ENCODE measurements at regions of chr3 and their contacts with region 1.

Region 1: DNA sequence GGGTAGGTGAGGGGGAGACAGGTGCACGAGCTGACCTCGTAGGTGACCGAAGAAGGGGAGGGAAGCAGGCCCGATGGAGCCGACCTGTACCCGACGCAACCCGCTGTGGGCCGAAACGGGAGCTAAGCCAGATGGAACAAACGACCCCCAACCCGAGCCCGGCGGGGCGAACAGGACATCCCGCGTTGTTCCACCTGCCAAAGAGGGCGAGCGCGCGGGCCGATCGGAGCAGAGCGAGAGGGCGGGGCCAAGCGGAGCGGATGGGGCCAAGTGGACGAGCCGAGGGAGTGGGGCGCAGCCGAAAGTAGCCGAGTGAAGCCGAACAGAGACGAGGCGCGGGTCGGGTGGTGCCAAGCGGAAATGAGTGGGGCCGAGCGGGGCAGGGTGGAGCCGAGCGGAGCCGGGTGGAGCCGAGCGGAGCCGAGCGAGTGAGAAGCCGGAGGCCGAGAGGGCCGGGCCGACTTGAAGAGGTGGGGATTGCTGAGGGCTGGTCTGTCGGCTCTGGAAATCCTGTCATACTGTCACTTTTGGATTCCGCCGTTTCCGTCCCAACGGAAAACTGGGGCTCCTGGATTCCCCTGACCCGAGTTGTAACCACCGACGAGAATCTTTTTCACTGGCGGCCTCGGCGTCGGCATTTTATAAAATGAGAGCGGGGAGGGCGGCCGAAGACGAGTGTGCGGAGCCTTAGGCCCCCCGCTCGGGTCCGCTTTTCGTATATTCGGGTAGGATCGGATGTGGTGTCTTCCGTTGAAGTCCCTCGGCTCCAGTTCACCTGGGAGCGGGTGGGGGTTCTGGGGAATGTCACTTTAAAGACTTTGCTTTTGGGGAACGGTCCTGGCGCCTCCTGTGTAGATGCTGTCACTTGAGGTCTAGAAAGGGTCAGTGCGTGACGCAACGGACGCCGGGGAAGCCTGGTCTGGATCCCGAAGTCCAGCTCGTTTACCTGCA is 15.6 kb upstream of the WNT7A start:
- DNase-seq: peak; percentile 85 to 95 (median 93)
- ATAC-seq: peak; percentile 97
- H3K4me3 ChIP-seq: peak overlapping the region; percentile 84
- H3K4me3 Mint-ChIP-seq: peak overlapping the region; percentile 67 to 94 (median 90)
- H3K27ac ChIP-seq: peak overlapping the region; percentile 94
- H3K27ac Mint-ChIP-seq: peak overlapping the region; percentile 79 to 95 (median 88)
- H3K4me1 ChIP-seq: peaks cover 26 to 31% of the 10 kb centered on the region in 2 donors
- H3K4me1 Mint-ChIP-seq: peaks cover 5 to 47% (median 29%) of the 10 kb centered on the region in 7 donors
- H3K27me3 ChIP-seq: no peaks in the 10 kb centered on the region
- H3K27me3 Mint-ChIP-seq: peaks cover 0 to 9% (median 0%) of the 10 kb centered on the region in 5 donors

Region 2: GRCh38 chr3:12967606-12968351 is 927.7 kb before region 1 on chr3:
- CTCF ChIA-PET with region 1: no interaction called
- POLR2A ChIA-PET with region 1: no interaction called
- intact Hi-C with region 1: loop called in 1 of 2 experiments (anchors 2 kb)
- DNase-seq: peak; percentile 71 to 87 (median 83)
- ATAC-seq: peak; percentile 99
- H3K4me3 ChIP-seq: peak overlapping the region; percentile 47
- H3K4me3 Mint-ChIP-seq: peak overlapping the region; percentile 74 to 87 (median 86)
- H3K27ac ChIP-seq: peak overlapping the region; percentile 29
- H3K27ac Mint-ChIP-seq: peak overlapping the region in 4 of 9 donors; percentile 9 to 84 (median 60)
- H3K4me1 ChIP-seq: peaks cover 47 to 53% of the 10 kb centered on the region in 2 donors
- H3K4me1 Mint-ChIP-seq: peaks cover 50 to 86% (median 77%) of the 10 kb centered on the region in 7 donors
- H3K27me3 ChIP-seq: no peaks in the 10 kb centered on the region
- H3K27me3 Mint-ChIP-seq: peaks cover 0 to 5% (median 0%) of the 10 kb centered on the region in 5 donors

Region 3: GRCh38 chr3:13879655-13880204 is 15.7 kb before region 1 on chr3 and contains the start of gene WNT7A:
- CTCF ChIA-PET with region 1: interaction called, 35 read pairs
- POLR2A ChIA-PET with region 1: interaction called, 37 read pairs
- intact Hi-C with region 1: loop called in 1 of 2 experiments (anchors 1 kb)
- DNase-seq: peak in 5 of 9 donors; percentile 33 to 70 (median 49)
- ATAC-seq: peak; percentile 38
- H3K4me3 ChIP-seq: peak within 1 kb of the TSS; percentile 75
- H3K4me3 Mint-ChIP-seq: peak within 1 kb of the TSS; percentile 50 to 95 (median 92)
- H3K27ac ChIP-seq: peak within 1 kb of the TSS; percentile 75
- H3K27ac Mint-ChIP-seq: peak within 1 kb of the TSS in 7 of 9 donors; percentile 45 to 92 (median 82)
- H3K4me1 ChIP-seq: peaks cover 5 to 6% of the 10 kb centered on the region in 2 donors
- H3K4me1 Mint-ChIP-seq: peaks cover 0 to 29% (median 23%) of the 10 kb centered on the region in 7 donors
- H3K27me3 ChIP-seq: peaks cover 0 to 6% of the 10 kb centered on the region in 2 donors
- H3K27me3 Mint-ChIP-seq: peaks cover 0 to 78% (median 34%) of the 10 kb centered on the region in 5 donors
- total RNA-seq, gene WNT7A: 0.15 to 21.8 (median 18.8) TPM

Region 4: DNA sequence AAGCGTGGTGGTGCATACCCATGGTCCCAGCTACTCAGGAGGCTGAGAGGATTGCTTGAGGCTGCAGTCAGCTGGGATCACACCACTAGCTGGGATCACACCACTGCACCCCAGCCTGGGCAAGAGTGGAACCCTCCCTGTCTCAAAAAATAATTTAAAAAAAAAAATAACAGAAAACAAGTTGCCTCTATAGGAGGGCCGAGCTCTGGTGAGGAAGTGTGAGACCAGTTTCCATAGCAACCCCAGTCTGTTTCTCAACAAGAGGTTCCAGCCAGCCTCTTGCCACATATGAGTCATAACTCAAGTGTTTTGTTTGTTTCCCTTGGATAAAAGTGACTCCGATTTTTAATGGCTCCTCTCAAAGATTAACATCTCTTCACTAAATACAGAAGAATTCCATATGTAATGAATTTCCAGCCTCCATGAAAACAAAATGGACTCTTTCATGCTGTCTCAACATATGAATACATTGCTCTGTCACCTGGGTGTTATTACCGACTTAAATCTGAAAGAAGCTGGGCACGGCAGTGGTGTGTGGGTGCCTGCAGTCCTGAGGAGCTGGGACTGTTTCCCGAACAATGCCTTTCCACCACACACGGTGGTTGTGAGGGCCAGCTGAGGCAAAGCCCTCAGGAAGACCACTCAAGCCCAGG is 249.1 kb after region 1 on chr3:
- CTCF ChIA-PET with region 1: interaction called, 3 read pairs
- POLR2A ChIA-PET with region 1: interaction called, 4 read pairs
- intact Hi-C with region 1: loop called (anchors 1 kb)
- DNase-seq: peak; percentile 45 to 93 (median 84)
- ATAC-seq: peak; percentile 75
- H3K4me3 ChIP-seq: peak overlapping the region; percentile 10
- H3K4me3 Mint-ChIP-seq: peak overlapping the region; percentile 53 to 76 (median 66)
- H3K27ac ChIP-seq: peak overlapping the region; percentile 79
- H3K27ac Mint-ChIP-seq: peak overlapping the region; percentile 89 to 100 (median 98)
- H3K4me1 ChIP-seq: peaks cover 50 to 52% of the 10 kb centered on the region in 2 donors
- H3K4me1 Mint-ChIP-seq: peaks cover 34 to 62% (median 56%) of the 10 kb centered on the region in 7 donors
- H3K27me3 ChIP-seq: no peaks in the 10 kb centered on the region
- H3K27me3 Mint-ChIP-seq: no peaks in the 10 kb centered on the region

Region 5: DNA sequence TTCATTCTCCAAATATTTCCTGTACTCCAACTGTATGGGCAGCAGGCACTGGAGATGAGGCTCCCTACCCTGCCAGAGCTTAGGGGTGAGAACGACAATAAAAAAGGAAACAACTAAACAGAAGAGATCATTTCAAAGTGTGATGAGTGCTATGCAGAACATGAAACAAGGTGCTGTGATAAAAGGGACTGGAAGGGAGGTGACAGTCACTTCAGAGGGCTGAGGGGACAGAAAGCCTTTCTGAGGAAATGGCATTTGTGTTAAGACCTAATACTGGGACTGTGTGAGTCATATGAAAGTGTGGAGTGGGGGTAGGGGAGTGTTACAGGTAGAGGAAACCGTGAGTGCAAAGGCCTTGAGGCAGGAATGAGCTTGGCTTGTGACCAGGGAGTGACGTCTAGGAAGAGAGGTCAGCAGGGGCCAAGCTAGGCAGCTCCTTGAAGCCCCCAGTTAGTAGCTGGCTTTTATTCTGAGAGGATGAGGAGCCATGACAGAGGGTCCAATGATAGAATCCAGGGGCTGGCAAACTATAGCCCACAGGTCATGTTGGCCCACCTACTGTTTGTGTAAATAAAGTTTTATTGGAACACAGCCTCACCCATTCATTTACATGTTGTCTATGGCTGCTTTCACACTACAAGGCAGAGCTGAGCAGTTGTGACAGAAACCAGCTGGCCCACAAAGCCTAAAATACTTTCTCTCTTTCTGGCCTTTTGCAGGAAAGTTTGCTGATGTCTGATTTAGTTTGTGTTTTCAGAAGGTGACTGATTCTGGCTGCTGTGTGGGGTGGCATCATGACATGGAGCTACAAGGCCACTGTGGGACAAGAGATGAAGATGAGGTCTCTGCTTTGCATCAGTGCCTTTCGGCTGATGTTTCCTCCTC is 339.8 kb after region 1 on chr3:
- CTCF ChIA-PET with region 1: no interaction called
- POLR2A ChIA-PET with region 1: no interaction called
- intact Hi-C with region 1: no loop called
- DNase-seq: no peak
- ATAC-seq: no peak
- H3K4me3 ChIP-seq: no peak overlapping the region
- H3K4me3 Mint-ChIP-seq: no peak overlapping the region
- H3K27ac ChIP-seq: no peak overlapping the region
- H3K27ac Mint-ChIP-seq: no peak overlapping the region
- H3K4me1 ChIP-seq: no peaks in the 10 kb centered on the region
- H3K4me1 Mint-ChIP-seq: peaks cover 4 to 14% (median 9%) of the 10 kb centered on the region in 7 donors
- H3K27me3 ChIP-seq: no peaks in the 10 kb centered on the region
- H3K27me3 Mint-ChIP-seq: peaks cover 25 to 51% (median 36%) of the 10 kb centered on the region in 5 donors

Region 6: GRCh38 chr3:14402304-14402811 is 506.9 kb after region 1 on chr3 and contains the start of gene SLC6A6:
- CTCF ChIA-PET with region 1: interaction called, 3 read pairs
- POLR2A ChIA-PET with region 1: interaction called, 9 read pairs
- intact Hi-C with region 1: loop called (anchors 1 kb)
- DNase-seq: peak; percentile 86 to 95 (median 92)
- ATAC-seq: peak; percentile 89
- H3K4me3 ChIP-seq: peak within 1 kb of the TSS; percentile 100
- H3K4me3 Mint-ChIP-seq: peak within 1 kb of the TSS; percentile 91 to 100 (median 98)
- H3K27ac ChIP-seq: peak within 1 kb of the TSS; percentile 83
- H3K27ac Mint-ChIP-seq: peak within 1 kb of the TSS; percentile 89 to 98 (median 96)
- H3K4me1 ChIP-seq: peaks cover 20 to 27% of the 10 kb centered on the region in 2 donors
- H3K4me1 Mint-ChIP-seq: peaks cover 33 to 50% (median 44%) of the 10 kb centered on the region in 7 donors
- H3K27me3 ChIP-seq: no peaks in the 10 kb centered on the region
- H3K27me3 Mint-ChIP-seq: peaks cover 0 to 1% (median 0%) of the 10 kb centered on the region in 5 donors
- total RNA-seq, gene SLC6A6: 34.5 to 87.5 (median 35.6) TPM

Region 7: GRCh38 chr3:14548321-14548729 is 652.9 kb after region 1 on chr3:
- CTCF ChIA-PET with region 1: interaction called, 4 read pairs
- POLR2A ChIA-PET with region 1: no interaction called
- intact Hi-C with region 1: loop called in 1 of 2 experiments (anchors 1 kb)
- DNase-seq: peak in 5 of 9 donors; percentile 21 to 33 (median 22)
- ATAC-seq: peak; percentile 47
- H3K4me3 ChIP-seq: no peak overlapping the region
- H3K4me3 Mint-ChIP-seq: no peak overlapping the region
- H3K27ac ChIP-seq: no peak overlapping the region
- H3K27ac Mint-ChIP-seq: no peak overlapping the region
- H3K4me1 ChIP-seq: no peaks in the 10 kb centered on the region
- H3K4me1 Mint-ChIP-seq: peaks cover 0 to 8% (median 0%) of the 10 kb centered on the region in 7 donors
- H3K27me3 ChIP-seq: no peaks in the 10 kb centered on the region
- H3K27me3 Mint-ChIP-seq: peaks cover 18 to 57% (median 41%) of the 10 kb centered on the region in 5 donors

Region 8: GRCh38 chr3:14633819-14634424 is 738.5 kb after region 1 on chr3:
- CTCF ChIA-PET with region 1: no interaction called
- POLR2A ChIA-PET with region 1: no interaction called
- intact Hi-C with region 1: no loop called
- DNase-seq: peak; percentile 24 to 63 (median 47)
- ATAC-seq: peak; percentile 82
- H3K4me3 ChIP-seq: no peak overlapping the region
- H3K4me3 Mint-ChIP-seq: no peak overlapping the region
- H3K27ac ChIP-seq: no peak overlapping the region
- H3K27ac Mint-ChIP-seq: no peak overlapping the region
- H3K4me1 ChIP-seq: no peaks in the 10 kb centered on the region
- H3K4me1 Mint-ChIP-seq: peaks cover 0 to 2% (median 0%) of the 10 kb centered on the region in 7 donors
- H3K27me3 ChIP-seq: no peaks in the 10 kb centered on the region
- H3K27me3 Mint-ChIP-seq: peaks cover 16 to 46% (median 21%) of the 10 kb centered on the region in 5 donors

Region 9: GRCh38 chr3:15205934-15206661 is 1310.7 kb after region 1 on chr3 and contains the start of gene CAPN7:
- CTCF ChIA-PET with region 1: no interaction called
- POLR2A ChIA-PET with region 1: no interaction called
- intact Hi-C with region 1: loop called in 1 of 2 experiments (anchors 10 kb)
- DNase-seq: peak; percentile 90 to 98 (median 92)
- ATAC-seq: peak; percentile 96
- H3K4me3 ChIP-seq: peak within 1 kb of the TSS; percentile 91
- H3K4me3 Mint-ChIP-seq: peak within 1 kb of the TSS; percentile 85 to 96 (median 94)
- H3K27ac ChIP-seq: peak within 1 kb of the TSS; percentile 94
- H3K27ac Mint-ChIP-seq: peak within 1 kb of the TSS; percentile 87 to 96 (median 93)
- H3K4me1 ChIP-seq: peaks cover 11 to 15% of the 10 kb centered on the region in 2 donors
- H3K4me1 Mint-ChIP-seq: peaks cover 19 to 52% (median 36%) of the 10 kb centered on the region in 7 donors
- H3K27me3 ChIP-seq: no peaks in the 10 kb centered on the region
- H3K27me3 Mint-ChIP-seq: no peaks in the 10 kb centered on the region
- total RNA-seq, gene CAPN7: 34.4 to 104 (median 70.4) TPM